Natural killer cell (primary cell): ENCODE measurements at regions of chr1 and their contacts with region 1.

Region 1: GRCh38 chr1:226679853-226680516 is 59.1 kb downstream of the ITPKB start:
- DNase-seq: peak; percentile 69 to 86
- ATAC-seq: peak; percentile 11 to 52 (median 38)
- H3K4me3 ChIP-seq: peak overlapping the region; percentile 26
- H3K4me3 Mint-ChIP-seq: peak overlapping the region; percentile 91
- H3K27ac ChIP-seq: peak overlapping the region; percentile 94
- H3K27ac Mint-ChIP-seq: peak overlapping the region; percentile 97 to 99
- H3K4me1 ChIP-seq: peaks cover 96% of the 10 kb centered on the region
- H3K4me1 Mint-ChIP-seq: peaks cover 99 to 100% of the 10 kb centered on the region in 2 donors
- H3K27me3 ChIP-seq: no peaks in the 10 kb centered on the region
- H3K27me3 Mint-ChIP-seq: no peaks in the 10 kb centered on the region
- CTCF ChIP-seq: no peak

Region 2: DNA sequence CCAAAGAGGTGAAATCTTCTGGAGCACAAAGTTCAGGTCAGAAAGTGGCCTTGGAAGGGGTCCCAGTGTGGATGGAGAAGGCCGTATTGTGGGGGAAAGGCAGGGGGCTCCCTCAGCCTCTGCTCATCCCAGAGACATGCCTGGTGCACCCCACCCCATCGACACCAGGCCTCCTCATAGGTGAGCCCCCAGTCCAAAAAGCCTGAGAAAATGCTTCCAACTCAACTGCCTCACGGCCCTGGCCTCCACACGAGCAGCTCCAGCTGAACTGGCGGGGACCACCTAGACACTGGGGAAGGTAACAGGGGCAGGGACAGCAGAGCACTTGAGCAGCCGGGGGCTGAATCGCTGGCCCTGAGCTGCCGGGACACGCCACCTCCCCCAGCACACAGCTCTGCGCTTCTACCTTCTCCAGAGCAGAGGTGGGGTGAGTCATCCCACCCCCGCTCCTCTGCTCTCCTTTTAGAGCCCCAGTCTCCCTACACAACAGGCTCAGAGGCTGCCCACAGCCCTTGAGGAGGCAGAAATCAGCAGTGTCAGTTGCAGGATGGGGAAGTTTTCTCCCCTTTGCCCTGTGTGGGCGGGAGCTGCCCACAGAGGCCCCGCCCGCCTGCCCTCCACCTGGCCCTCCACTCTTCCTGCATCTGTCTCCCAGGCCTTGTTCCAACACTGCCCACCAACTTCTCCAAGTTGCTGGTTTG is 37.0 kb before region 1 on chr1:
- intact Hi-C with region 1: loop called (anchors 5 kb)
- DNase-seq: peak in 1 of 2 donors; percentile 61
- ATAC-seq: peak; percentile 37 to 81 (median 42)
- H3K4me3 ChIP-seq: no peak overlapping the region
- H3K4me3 Mint-ChIP-seq: peak overlapping the region; percentile 13
- H3K27ac ChIP-seq: peak overlapping the region; percentile 52
- H3K27ac Mint-ChIP-seq: peak overlapping the region; percentile 70 to 85
- H3K4me1 ChIP-seq: peaks cover 43% of the 10 kb centered on the region
- H3K4me1 Mint-ChIP-seq: peaks cover 28 to 29% of the 10 kb centered on the region in 2 donors
- H3K27me3 ChIP-seq: no peaks in the 10 kb centered on the region
- H3K27me3 Mint-ChIP-seq: no peaks in the 10 kb centered on the region
- CTCF ChIP-seq: no peak

Region 3: DNA sequence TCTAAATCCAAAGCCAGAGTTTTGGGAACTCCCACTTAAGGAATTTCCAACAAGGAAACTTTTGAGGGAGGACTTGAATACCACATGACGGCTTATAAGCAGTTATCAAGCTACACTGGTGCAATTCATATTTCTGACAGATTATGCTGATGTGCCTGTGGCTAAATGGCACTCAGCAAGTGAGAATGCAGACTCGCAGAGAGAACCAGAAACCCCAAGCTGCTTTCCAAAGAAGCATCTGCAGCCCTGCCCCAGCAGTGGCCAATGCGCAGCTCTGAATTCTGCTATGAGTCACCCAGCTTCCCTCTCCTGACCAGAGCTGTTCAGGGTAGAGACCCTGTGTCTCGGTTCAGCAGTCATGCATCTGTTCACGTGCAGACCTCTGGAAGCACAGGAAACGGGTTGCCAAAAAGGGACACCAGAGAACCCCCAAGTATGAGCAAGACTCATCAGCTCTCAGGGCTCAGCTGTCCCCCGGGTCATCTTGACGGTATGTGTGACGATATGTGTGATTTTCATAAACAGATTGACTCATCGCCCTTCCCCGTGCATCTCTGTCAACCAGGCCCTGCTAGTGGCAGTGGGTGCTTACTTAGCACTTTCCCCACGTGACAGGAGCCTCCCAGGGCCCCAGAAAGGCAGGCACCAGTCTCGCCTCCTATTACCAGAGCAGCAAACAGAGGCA is 17.2 kb before region 1 on chr1:
- intact Hi-C with region 1: loop called (anchors 1 kb)
- DNase-seq: peak; percentile 80 to 96
- ATAC-seq: peak; percentile 81 to 94 (median 88)
- H3K4me3 ChIP-seq: no peak overlapping the region
- H3K4me3 Mint-ChIP-seq: peak overlapping the region; percentile 84
- H3K27ac ChIP-seq: peak overlapping the region; percentile 88
- H3K27ac Mint-ChIP-seq: peak overlapping the region in 1 of 2 donors; percentile 100
- H3K4me1 ChIP-seq: peaks cover 92% of the 10 kb centered on the region
- H3K4me1 Mint-ChIP-seq: peaks cover 81 to 88% of the 10 kb centered on the region in 2 donors
- H3K27me3 ChIP-seq: no peaks in the 10 kb centered on the region
- H3K27me3 Mint-ChIP-seq: no peaks in the 10 kb centered on the region
- CTCF ChIP-seq: no peak

Region 4: GRCh38 chr1:226702957-226703831 is 23.2 kb after region 1 on chr1:
- intact Hi-C with region 1: loop called (anchors 1 kb)
- DNase-seq: peak; percentile 87 to 92
- ATAC-seq: peak; percentile 87 to 96 (median 90)
- H3K4me3 ChIP-seq: peak overlapping the region; percentile 47
- H3K4me3 Mint-ChIP-seq: peak overlapping the region; percentile 83
- H3K27ac ChIP-seq: peak overlapping the region; percentile 85
- H3K27ac Mint-ChIP-seq: peak overlapping the region; percentile 95 to 99
- H3K4me1 ChIP-seq: peaks cover 40% of the 10 kb centered on the region
- H3K4me1 Mint-ChIP-seq: peaks cover 59 to 66% of the 10 kb centered on the region in 2 donors
- H3K27me3 ChIP-seq: no peaks in the 10 kb centered on the region
- H3K27me3 Mint-ChIP-seq: no peaks in the 10 kb centered on the region
- CTCF ChIP-seq: no peak

Region 5: DNA sequence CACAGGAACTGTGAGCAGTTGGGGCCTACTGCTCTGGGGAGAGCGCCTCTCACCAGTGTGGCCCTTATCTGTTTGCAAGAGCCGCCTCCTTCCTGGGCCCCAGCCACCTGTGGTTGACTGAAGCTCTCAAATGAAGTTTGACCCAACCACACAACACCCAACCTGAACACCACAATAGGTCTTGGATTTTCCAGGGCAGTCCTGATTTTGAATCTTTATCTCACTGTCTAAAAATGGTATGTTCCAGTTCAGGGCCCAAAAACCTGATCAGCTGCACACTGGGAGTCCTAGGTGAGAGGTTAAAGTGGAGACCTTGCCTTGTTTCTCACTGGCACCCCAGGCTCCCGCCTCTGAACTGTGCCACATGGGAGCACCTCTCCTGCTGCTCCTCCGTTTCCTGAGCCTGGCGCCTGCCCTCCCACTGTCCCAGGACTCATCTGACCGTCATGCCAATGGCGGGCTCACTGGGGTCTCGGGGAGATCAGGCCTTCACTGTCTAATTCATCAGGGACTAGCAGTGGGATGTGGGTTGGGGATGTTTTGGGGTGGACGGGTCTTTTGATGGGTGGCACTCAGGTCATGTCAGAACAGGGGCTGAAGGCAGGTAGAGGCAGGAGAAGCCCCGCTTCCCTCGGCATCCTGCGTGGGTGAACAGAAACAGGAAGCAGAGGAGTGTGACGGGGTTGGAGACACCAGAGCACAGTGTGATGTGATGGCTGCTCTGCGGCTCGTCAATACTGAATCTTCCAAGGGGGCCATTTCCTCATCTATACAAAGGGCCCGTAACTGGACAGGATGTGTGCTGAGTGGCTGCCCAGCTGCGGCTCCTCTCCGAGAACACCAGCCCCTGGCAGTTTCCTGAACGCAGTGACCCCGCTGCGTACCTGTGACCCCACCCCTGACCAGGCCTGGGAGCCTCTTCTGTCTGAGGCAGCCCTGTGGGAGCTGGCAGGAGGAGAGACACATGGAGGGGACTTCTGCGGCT is 118.7 kb after region 1 on chr1:
- intact Hi-C with region 1: loop called (anchors 1 kb)
- DNase-seq: peak; percentile 49 to 80
- ATAC-seq: peak; percentile 80 to 94 (median 82)
- H3K4me3 ChIP-seq: no peak overlapping the region
- H3K4me3 Mint-ChIP-seq: peak overlapping the region; percentile 72
- H3K27ac ChIP-seq: peak overlapping the region; percentile 79
- H3K27ac Mint-ChIP-seq: peak overlapping the region; percentile 92 to 97
- H3K4me1 ChIP-seq: peaks cover 33% of the 10 kb centered on the region
- H3K4me1 Mint-ChIP-seq: peaks cover 32 to 34% of the 10 kb centered on the region in 2 donors
- H3K27me3 ChIP-seq: no peaks in the 10 kb centered on the region
- H3K27me3 Mint-ChIP-seq: no peaks in the 10 kb centered on the region
- CTCF ChIP-seq: no peak